ENCODE measurements at regions of chr5 and their contacts with region 1.

Region 1: GRCh38 chr5:77734885-77735284 is 41.3 kb downstream of the TBCA start:
- DNase-seq: no peak
- ATAC-seq: no peak
- H3K4me3 Mint-ChIP-seq: no peak overlapping the region
- H3K27ac Mint-ChIP-seq: no peak overlapping the region
- H3K4me1 Mint-ChIP-seq: peaks cover 25% of the 10 kb centered on the region
- H3K27me3 Mint-ChIP-seq: no peaks in the 10 kb centered on the region
- CTCF ChIP-seq: no peak

Region 2: DNA sequence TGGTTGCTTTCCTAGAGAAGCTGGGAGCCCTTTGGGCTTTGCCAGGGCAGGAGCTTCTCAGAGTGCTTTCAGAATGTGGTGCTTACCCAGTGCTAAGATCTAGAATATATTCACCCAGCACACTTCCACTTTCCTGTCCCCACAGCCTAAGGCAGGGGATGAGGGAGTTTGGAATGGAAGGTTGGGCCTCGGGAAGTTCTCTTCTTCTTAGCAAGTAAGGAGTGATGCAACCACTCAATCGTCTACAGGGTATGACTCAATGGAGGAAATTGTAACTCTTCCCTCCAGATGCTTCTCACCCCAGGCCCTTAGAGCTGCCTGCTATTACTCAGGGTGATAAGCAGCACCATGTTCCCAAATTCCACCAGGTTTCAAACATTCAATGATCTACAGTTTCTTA is 735.5 kb before region 1 on chr5:
- CTCF ChIA-PET with region 1: no interaction called
- POLR2A ChIA-PET with region 1: no interaction called
- intact Hi-C with region 1: no loop called
- DNase-seq: no peak
- ATAC-seq: no peak
- H3K4me3 Mint-ChIP-seq: no peak overlapping the region
- H3K27ac Mint-ChIP-seq: no peak overlapping the region
- H3K4me1 Mint-ChIP-seq: no peaks in the 10 kb centered on the region
- H3K27me3 Mint-ChIP-seq: peaks cover 3% of the 10 kb centered on the region
- CTCF ChIP-seq: no peak

Region 3: DNA sequence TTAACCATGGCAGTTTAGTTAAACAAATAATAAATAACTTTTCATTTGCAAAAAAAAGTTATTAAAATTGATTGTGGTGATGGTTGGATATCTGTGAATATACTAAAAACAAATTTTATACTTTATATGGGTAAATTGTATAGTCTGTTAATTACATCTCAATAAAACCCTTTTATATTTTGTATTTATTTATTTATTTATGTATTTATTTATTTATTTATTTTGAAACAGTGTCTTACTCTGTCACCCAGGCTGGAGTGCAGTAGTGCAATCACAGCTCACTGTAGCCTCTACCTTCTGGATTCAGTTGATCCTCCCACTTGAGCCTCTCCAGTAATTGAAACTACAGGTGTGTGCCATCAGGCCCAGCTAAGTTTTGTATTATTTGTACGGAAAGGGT is 148.8 kb before region 1 on chr5:
- CTCF ChIA-PET with region 1: no interaction called
- POLR2A ChIA-PET with region 1: no interaction called
- intact Hi-C with region 1: no loop called
- DNase-seq: no peak
- ATAC-seq: no peak
- H3K4me3 Mint-ChIP-seq: no peak overlapping the region
- H3K27ac Mint-ChIP-seq: no peak overlapping the region
- H3K4me1 Mint-ChIP-seq: peaks cover 10% of the 10 kb centered on the region
- H3K27me3 Mint-ChIP-seq: peaks cover 12% of the 10 kb centered on the region
- CTCF ChIP-seq: no peak

Region 4: GRCh38 chr5:77718934-77719610 is 15.8 kb before region 1 on chr5:
- CTCF ChIA-PET with region 1: no interaction called
- POLR2A ChIA-PET with region 1: no interaction called
- intact Hi-C with region 1: loop called (anchors 2 kb)
- DNase-seq: no peak
- ATAC-seq: peak; percentile 64
- H3K4me3 Mint-ChIP-seq: peak overlapping the region; percentile 53
- H3K27ac Mint-ChIP-seq: peak overlapping the region; percentile 46
- H3K4me1 Mint-ChIP-seq: peaks cover 39% of the 10 kb centered on the region
- H3K27me3 Mint-ChIP-seq: no peaks in the 10 kb centered on the region
- CTCF ChIP-seq: no peak